Uterus (tissue), 4 donors: ENCODE measurements at regions of chr13 and their contacts with region 1.

Region 1: DNA sequence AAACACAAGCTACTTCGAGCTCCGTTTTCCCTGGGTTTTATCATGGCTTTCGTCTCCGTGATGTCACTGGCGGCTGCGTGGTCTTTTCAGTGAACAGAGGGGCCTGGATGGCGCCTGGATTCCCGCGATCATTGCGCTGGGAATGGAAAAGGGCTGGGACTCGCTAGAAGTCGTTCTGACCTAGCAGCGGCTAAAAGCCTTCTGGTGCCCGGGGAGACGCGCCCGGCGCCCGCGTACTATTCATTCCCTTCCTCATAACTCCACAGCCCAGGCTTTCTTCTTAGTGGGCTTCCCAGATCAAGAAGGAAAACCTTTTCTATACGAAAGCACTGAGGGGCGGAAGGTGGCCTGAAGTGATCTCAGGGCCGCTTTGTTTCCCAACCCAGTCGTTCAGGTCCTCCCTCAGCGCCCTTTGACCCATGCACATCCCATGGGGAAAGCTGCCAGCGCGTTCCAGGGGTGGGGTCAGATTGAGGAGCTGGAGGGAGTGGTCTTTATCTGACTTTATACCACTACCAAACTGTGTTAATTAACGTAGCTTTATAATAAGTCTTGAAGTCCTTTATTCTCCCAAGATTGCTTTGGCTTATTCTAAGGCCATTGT is 96.6 kb downstream of the ELF1 start:
- DNase-seq: peak; percentile 20 to 21
- H3K4me3 ChIP-seq: no peak overlapping the region
- H3K27ac ChIP-seq: no peak overlapping the region
- H3K4me1 ChIP-seq: peaks cover 0 to 4% of the 10 kb centered on the region in 2 donors
- H3K27me3 ChIP-seq: no peaks in the 10 kb centered on the region
- CTCF ChIP-seq: no peak
- POLR2A ChIP-seq: no peak

Region 2: GRCh38 chr13:41061075-41061913 is 138.8 kb after region 1 on chr13 and contains the start of gene WBP4:
- intact Hi-C with region 1: loop called (anchors 10 kb)
- DNase-seq: peak; percentile 94 to 95
- H3K4me3 ChIP-seq: peak within 1 kb of the TSS; percentile 84 to 98
- H3K27ac ChIP-seq: peak within 1 kb of the TSS; percentile 99 to 100
- H3K4me1 ChIP-seq: peaks cover 0 to 33% of the 10 kb centered on the region in 2 donors
- H3K27me3 ChIP-seq: no peaks in the 10 kb centered on the region
- CTCF ChIP-seq: peak in 3 of 4 experiments; percentile 11 to 38 (median 16)
- POLR2A ChIP-seq: peak; percentile 60 to 81
- total RNA-seq, gene WBP4: 8.8 to 16.2 (median 14.2) TPM

Region 3: DNA sequence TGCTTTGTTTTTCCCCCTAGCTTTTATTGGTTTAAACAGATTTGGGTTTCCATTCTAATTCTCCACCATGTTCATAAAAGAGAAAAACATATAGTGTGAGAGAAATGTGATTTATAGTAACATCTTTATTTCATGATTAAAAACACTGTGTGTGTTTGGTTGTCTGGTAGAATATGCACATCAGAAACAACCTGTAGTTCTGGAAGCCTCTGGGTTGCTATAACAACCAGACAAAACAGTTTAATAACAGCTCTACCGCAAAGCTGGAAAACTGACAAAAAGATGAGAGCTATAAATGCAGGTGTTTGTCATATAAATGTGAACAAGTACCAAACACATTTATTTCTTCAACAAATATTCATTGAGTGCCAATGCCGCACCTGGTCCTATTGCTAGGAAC is 200.3 kb after region 1 on chr13:
- intact Hi-C with region 1: no loop called
- DNase-seq: no peak
- H3K4me3 ChIP-seq: no peak overlapping the region
- H3K27ac ChIP-seq: no peak overlapping the region
- H3K4me1 ChIP-seq: no peaks in the 10 kb centered on the region
- H3K27me3 ChIP-seq: no peaks in the 10 kb centered on the region
- CTCF ChIP-seq: no peak
- POLR2A ChIP-seq: no peak

Region 4: DNA sequence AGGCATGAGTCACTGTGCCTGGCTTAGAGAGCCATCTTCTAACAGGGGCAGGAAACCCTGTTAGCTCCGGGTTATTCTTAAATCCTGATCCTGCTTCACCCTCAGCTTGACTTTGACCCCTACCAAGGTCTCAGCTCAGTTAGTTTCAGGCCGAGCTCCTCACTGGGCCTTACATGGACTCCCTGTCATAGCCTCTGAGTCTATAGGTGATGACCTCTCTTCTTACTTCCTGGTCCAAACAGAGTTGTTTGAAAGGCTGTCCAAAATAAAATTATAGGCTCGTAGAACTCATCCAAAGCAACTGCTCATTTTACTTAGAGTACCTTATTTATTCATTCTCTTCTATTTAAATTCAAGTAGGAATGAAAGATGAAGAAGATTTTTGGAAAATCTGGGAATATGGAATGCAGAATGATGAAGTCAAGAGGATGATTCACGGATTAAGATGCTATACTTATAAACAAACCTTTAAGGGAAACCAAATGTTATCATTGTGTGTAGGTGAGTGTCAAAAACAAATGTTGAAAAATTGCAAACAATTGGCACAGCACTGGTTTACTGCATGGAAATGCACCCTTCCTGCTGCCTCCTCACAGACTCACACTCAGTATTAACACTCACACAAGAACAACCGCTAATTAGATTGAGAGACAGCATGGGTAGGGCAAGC is 708.9 kb after region 1 on chr13:
- intact Hi-C with region 1: no loop called
- DNase-seq: no peak
- H3K4me3 ChIP-seq: no peak overlapping the region
- H3K27ac ChIP-seq: no peak overlapping the region
- H3K4me1 ChIP-seq: peaks cover 0 to 11% of the 10 kb centered on the region in 2 donors
- H3K27me3 ChIP-seq: no peaks in the 10 kb centered on the region
- CTCF ChIP-seq: no peak
- POLR2A ChIP-seq: no peak